GM12878 (cell line): ENCODE measurements at regions of chr17 and their contacts with region 1.

Region 1: DNA sequence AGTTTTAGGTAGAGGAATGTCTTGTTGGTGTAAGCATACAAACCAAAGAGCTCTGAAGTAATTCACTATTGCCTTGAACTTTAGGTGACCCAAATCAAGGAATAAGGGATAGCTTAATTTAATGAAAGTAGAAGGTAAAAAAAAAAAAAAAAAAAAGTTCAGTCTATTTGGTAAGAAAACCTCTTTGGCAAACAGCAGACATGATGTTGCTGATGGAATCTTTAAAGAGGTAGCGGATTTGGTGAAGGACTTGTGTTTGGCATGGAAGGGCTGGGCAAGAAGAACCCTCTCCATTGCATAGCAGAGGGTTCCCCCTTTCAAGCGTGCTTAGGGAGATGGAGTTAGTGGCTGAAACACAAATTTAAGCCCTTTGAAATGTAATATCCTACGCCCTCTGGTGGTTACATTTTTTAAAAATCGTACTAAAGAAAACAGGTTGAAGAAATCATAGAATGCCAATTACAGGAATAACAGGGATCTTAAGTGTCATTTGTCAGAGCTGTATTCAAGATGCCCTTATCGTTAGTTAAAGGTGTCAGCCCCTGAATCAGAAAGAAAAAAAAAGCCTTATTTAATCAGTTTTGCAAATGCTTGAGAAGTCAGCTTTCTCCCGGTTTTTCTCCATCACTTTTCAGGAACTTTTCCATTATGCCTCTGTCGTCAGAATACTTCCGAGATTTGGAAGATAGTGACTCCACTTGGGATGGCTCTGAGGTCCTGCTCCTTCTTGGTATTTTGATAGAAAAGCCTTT is 383.1 kb downstream of the KCNJ2 start:
- DNase-seq: peak; percentile 13
- ATAC-seq: peak; percentile 68
- H3K4me3 ChIP-seq: no peak overlapping the region
- H3K27ac ChIP-seq: no peak overlapping the region
- H3K4me1 ChIP-seq: no peaks in the 10 kb centered on the region
- H3K27me3 ChIP-seq: no peaks in the 10 kb centered on the region
- CTCF ChIP-seq: peak; percentile 24 to 54 (median 31); a peak in 4 of 6 replicates
- EP300 ChIP-seq: no peak
- POLR2A ChIP-seq: no peak
- RAD21 ChIP-seq: peak; percentile 64

Region 2: GRCh38 chr17:69567130-69567529 is 985.3 kb before region 1 on chr17:
- CTCF ChIA-PET with region 1: interaction called, 27 read pairs
- POLR2A ChIA-PET with region 1: no interaction called
- RAD21 ChIA-PET with region 1: interaction called, 24 read pairs
- SMC1A ChIA-PET with region 1: interaction called, 5 read pairs
- in situ Hi-C with region 1: loop called (anchors 10 kb)
- intact Hi-C with region 1: loop called (anchors 5 kb)
- DNase-seq: no peak
- ATAC-seq: no peak
- H3K4me3 ChIP-seq: no peak overlapping the region
- H3K27ac ChIP-seq: no peak overlapping the region
- H3K4me1 ChIP-seq: no peaks in the 10 kb centered on the region
- H3K27me3 ChIP-seq: no peaks in the 10 kb centered on the region
- CTCF ChIP-seq: no peak
- EP300 ChIP-seq: no peak
- POLR2A ChIP-seq: no peak
- RAD21 ChIP-seq: no peak

Region 3: GRCh38 chr17:70132505-70132904 is 419.9 kb before region 1 on chr17:
- CTCF ChIA-PET with region 1: interaction called, 20 read pairs
- POLR2A ChIA-PET with region 1: no interaction called
- RAD21 ChIA-PET with region 1: interaction called, 6 read pairs
- SMC1A ChIA-PET with region 1: interaction called, 14 read pairs
- in situ Hi-C with region 1: no loop called
- intact Hi-C with region 1: loop called (anchors 5 kb)
- DNase-seq: no peak
- ATAC-seq: no peak
- H3K4me3 ChIP-seq: no peak overlapping the region
- H3K27ac ChIP-seq: no peak overlapping the region
- H3K4me1 ChIP-seq: peaks cover 9% of the 10 kb centered on the region; the same call in 1 of the 2 replicates
- H3K27me3 ChIP-seq: no peaks in the 10 kb centered on the region; a peak in 1 of 4 replicates
- CTCF ChIP-seq: no peak
- EP300 ChIP-seq: no peak
- POLR2A ChIP-seq: no peak
- RAD21 ChIP-seq: no peak

Region 4: GRCh38 chr17:70168977-70169708 is 383.3 kb before region 1 on chr17 and contains the start of gene KCNJ2:
- CTCF ChIA-PET with region 1: interaction called, 14 read pairs
- POLR2A ChIA-PET with region 1: no interaction called
- RAD21 ChIA-PET with region 1: interaction called, 23 read pairs
- SMC1A ChIA-PET with region 1: interaction called, 19 read pairs
- in situ Hi-C with region 1: no loop called
- intact Hi-C with region 1: loop called (anchors 5 kb)
- DNase-seq: no peak
- ATAC-seq: peak; percentile 95
- H3K4me3 ChIP-seq: peak within 1 kb of the TSS; percentile 38
- H3K27ac ChIP-seq: no peak within 1 kb of the TSS
- H3K4me1 ChIP-seq: peaks cover 8% of the 10 kb centered on the region
- H3K27me3 ChIP-seq: peaks cover 0 to 10% of the 10 kb centered on the region in 2 experiments; a peak in 1 of 4 replicates
- CTCF ChIP-seq: no peak
- EP300 ChIP-seq: no peak
- POLR2A ChIP-seq: no peak
- RAD21 ChIP-seq: no peak
- polyA plus RNA-seq, gene KCNJ2: 1.6 to 3.0 TPM

Region 5: DNA sequence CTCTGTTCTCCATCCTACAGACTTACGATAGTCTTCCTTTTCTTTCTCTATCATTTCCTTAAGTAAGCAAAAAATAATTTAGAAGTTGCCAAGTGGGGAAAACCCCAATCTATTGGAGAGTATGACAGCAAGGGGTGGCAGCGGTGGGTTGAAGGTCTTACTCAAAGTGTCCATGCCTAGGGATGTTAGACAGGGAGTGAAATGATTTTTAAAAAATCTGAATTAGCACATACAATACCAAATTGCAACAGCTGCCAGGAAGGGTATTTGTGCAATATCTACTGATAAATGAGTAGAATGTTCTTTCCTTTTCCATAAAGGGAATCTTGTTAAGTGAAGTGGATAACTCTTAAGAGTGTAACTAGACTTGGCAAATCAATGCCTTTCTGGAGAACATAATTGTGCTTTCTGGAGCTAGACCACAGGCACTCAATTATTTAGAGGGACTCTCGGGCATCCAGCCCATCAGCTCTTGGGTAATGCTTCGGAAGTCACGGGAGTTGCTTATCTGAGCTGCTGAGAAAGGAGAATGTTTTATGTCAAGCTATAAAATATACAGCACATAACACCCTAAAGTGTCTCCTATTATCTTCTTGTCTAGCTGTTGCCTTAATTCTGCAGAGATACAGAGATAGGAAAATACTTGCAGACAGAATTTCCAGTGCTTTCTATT is 231.6 kb before region 1 on chr17:
- CTCF ChIA-PET with region 1: interaction called, 5 read pairs
- POLR2A ChIA-PET with region 1: no interaction called
- RAD21 ChIA-PET with region 1: interaction called, 4 read pairs
- SMC1A ChIA-PET with region 1: interaction called, 4 read pairs
- in situ Hi-C with region 1: no loop called
- intact Hi-C with region 1: loop called (anchors 10 kb)
- DNase-seq: no peak
- ATAC-seq: no peak
- H3K4me3 ChIP-seq: no peak overlapping the region
- H3K27ac ChIP-seq: no peak overlapping the region
- H3K4me1 ChIP-seq: no peaks in the 10 kb centered on the region
- H3K27me3 ChIP-seq: no peaks in the 10 kb centered on the region
- CTCF ChIP-seq: no peak
- EP300 ChIP-seq: no peak
- POLR2A ChIP-seq: no peak
- RAD21 ChIP-seq: no peak

Region 6: GRCh38 chr17:70527364-70527888 is 25.0 kb before region 1 on chr17:
- CTCF ChIA-PET with region 1: interaction called, 9 read pairs
- POLR2A ChIA-PET with region 1: no interaction called
- RAD21 ChIA-PET with region 1: interaction called, 6 read pairs
- SMC1A ChIA-PET with region 1: interaction called, 15 read pairs
- in situ Hi-C with region 1: no loop called
- intact Hi-C with region 1: no loop called
- DNase-seq: no peak
- ATAC-seq: peak; percentile 67
- H3K4me3 ChIP-seq: no peak overlapping the region
- H3K27ac ChIP-seq: no peak overlapping the region
- H3K4me1 ChIP-seq: no peaks in the 10 kb centered on the region
- H3K27me3 ChIP-seq: no peaks in the 10 kb centered on the region
- CTCF ChIP-seq: no peak
- EP300 ChIP-seq: no peak
- POLR2A ChIP-seq: no peak
- RAD21 ChIP-seq: no peak